Sciatic nerve (tissue), 2 donors: ENCODE measurements at regions of chr3 and their contacts with region 1.

Region 1: GRCh38 chr3:124688581-124689454 is 41.4 kb upstream of the UMPS start:
- DNase-seq: peak; percentile 83
- ATAC-seq: peak; percentile 77

Region 2: DNA sequence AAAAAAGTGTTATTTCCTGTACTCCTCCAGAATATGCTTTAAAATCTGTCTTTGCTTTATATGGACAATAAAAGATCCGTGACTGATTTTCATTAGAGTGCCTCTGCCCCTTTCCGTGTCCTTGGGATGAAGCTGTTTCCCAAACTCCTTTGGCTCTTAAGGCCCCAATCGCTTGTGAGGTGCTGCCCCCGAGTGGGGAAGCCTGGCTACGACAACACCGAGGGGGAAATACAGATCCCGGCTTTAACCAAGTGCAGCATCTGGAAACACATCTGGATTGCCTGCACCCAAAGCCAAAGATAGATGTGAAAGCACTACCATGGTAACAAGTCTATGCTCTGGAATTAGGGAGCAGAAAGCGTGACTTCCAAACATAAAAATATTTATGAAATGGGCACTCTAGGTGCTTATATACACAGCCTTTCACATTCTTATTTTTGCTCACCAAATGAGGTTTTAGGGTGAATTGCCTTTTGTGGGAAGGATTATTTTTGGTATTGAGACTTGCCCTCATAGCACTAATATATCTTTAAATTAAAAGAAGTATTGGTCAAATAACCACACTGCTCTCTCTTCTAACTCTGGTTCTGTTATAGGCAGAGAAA is 1199.3 kb before region 1 on chr3:
- intact Hi-C with region 1: loop called (anchors 5 kb)
- DNase-seq: peak; percentile 84
- ATAC-seq: peak; percentile 89

Region 3: GRCh38 chr3:124559881-124560574 is 128.8 kb before region 1 on chr3:
- intact Hi-C with region 1: loop called (anchors 10 kb)
- DNase-seq: peak; percentile 82
- ATAC-seq: peak; percentile 83